Activated CD4-positive, alpha-beta memory T cell treated with anti-CD3 and anti-CD28 coated beads for 36 hours (primary cell): ENCODE measurements at regions of chr9 and their contacts with region 1.

Region 1: DNA sequence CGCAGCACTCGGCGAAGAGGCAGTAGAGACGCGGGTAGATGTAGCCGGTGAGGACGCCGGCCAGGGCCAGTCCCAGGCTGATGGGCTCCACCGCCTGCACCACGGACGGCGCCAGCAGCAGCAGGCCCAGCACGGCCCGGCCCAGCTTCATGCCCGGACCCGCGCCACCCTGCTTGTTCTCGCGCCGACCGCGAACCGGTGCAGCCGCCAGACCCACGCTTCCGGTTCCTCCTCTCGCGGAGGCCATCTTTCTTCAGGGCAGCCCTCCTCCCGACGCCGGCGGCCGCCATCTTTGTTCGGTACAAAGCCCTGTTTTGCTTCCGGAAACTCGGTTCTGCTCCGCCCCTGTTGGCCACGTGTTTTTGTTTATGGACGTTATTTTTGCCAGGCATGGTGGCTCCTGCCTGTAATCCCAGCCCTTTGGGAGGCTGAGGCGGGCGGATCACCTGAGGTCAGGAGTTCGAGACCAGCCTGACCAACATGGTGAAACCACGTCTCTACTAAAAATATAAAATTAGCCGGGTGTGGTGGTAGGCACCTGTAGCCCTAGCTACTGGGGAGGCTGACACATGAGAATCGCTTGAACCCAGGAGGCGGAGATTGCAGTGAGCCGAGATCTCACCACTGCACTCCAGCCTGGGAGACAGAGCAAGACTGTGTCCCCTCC is at the start of gene TOR1A:
- DNase-seq: peak; percentile 96
- H3K4me3 Mint-ChIP-seq: peak within 1 kb of the TSS; percentile 81
- H3K27ac Mint-ChIP-seq: peak within 1 kb of the TSS; percentile 80
- H3K4me1 Mint-ChIP-seq: peaks cover 13% of the 10 kb centered on the region
- H3K27me3 Mint-ChIP-seq: no peaks in the 10 kb centered on the region
- total RNA-seq, gene TOR1A: 38.5 to 41.6 TPM

Region 2: DNA sequence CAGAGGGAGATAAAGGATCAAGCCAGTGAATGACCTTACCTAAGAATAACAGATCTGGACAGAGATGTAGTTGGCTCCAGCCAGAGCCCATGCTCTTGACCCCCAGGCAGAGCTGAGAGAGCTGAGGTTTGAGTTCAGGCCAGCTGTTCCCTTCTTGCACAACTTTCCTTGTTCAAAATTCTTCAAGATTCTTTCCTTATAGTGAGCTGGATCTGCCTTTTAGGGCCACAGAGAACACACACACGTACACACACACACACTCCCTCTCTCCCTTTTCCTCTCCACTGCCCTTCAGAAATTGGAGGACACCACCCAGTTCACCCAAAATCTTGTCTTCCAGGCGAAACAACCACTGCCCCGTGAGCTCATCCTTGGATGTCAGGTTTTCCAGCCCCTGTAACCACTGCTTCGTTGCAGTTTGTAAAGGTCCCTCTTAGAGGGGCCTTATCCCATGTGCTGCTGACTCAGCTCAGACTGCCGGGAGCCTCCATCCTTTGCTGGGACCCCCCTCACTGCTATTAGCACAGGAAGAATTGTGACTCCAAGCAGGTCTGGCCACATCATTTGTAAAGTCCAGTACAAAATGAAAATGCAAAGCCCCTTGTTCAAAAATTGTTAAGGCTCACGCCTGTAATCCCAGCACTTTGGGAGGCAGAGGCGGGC is 60.7 kb before region 1 on chr9:
- CTCF ChIA-PET with region 1: no interaction called
- POLR2A ChIA-PET with region 1: no interaction called
- intact Hi-C with region 1: no loop called
- DNase-seq: no peak
- H3K4me3 Mint-ChIP-seq: no peak overlapping the region
- H3K27ac Mint-ChIP-seq: peak overlapping the region; percentile 10
- H3K4me1 Mint-ChIP-seq: no peaks in the 10 kb centered on the region
- H3K27me3 Mint-ChIP-seq: no peaks in the 10 kb centered on the region

Region 3: GRCh38 chr9:129776938-129777768 is 46.9 kb before region 1 on chr9:
- CTCF ChIA-PET with region 1: no interaction called
- POLR2A ChIA-PET with region 1: no interaction called
- intact Hi-C with region 1: no loop called
- DNase-seq: peak; percentile 82
- H3K4me3 Mint-ChIP-seq: no peak overlapping the region
- H3K27ac Mint-ChIP-seq: no peak overlapping the region
- H3K4me1 Mint-ChIP-seq: peaks cover 15% of the 10 kb centered on the region
- H3K27me3 Mint-ChIP-seq: peaks cover 7% of the 10 kb centered on the region

Region 4: GRCh38 chr9:129802851-129803675 is 21.0 kb before region 1 on chr9 and contains the start of gene TOR1B:
- CTCF ChIA-PET with region 1: no interaction called
- POLR2A ChIA-PET with region 1: interaction called, 4 read pairs
- intact Hi-C with region 1: loop called (anchors 1 kb)
- DNase-seq: peak; percentile 96
- H3K4me3 Mint-ChIP-seq: peak within 1 kb of the TSS; percentile 84
- H3K27ac Mint-ChIP-seq: peak within 1 kb of the TSS; percentile 85
- H3K4me1 Mint-ChIP-seq: peaks cover 17% of the 10 kb centered on the region
- H3K27me3 Mint-ChIP-seq: no peaks in the 10 kb centered on the region
- total RNA-seq, gene TOR1B: 20.6 to 23.0 TPM

Region 5: GRCh38 chr9:129863059-129863690 is 39.1 kb after region 1 on chr9:
- CTCF ChIA-PET with region 1: no interaction called
- POLR2A ChIA-PET with region 1: no interaction called
- intact Hi-C with region 1: loop called (anchors 5 kb)
- DNase-seq: peak; percentile 89
- H3K4me3 Mint-ChIP-seq: peak overlapping the region; percentile 52
- H3K27ac Mint-ChIP-seq: peak overlapping the region; percentile 84
- H3K4me1 Mint-ChIP-seq: peaks cover 70% of the 10 kb centered on the region
- H3K27me3 Mint-ChIP-seq: no peaks in the 10 kb centered on the region